ENCODE measurements at regions of chr19 and their contacts with region 1.

Region 1: GRCh38 chr19:45178262-45179071 is at the start of gene BLOC1S3:
- DNase-seq: peak; percentile 100
- H3K4me3 ChIP-seq: peak within 1 kb of the TSS; percentile 70 to 79 (median 74)
- H3K27ac ChIP-seq: peak within 1 kb of the TSS; percentile 90 to 93 (median 92)
- H3K4me1 ChIP-seq: peaks cover 27 to 47% (median 42%) of the 10 kb centered on the region in 4 donors
- H3K27me3 ChIP-seq: no peaks in the 10 kb centered on the region
- CTCF ChIP-seq: peak; percentile 24 to 33 (median 31)
- EP300 ChIP-seq: no peak
- POLR2A ChIP-seq: peak; percentile 90
- total RNA-seq, gene BLOC1S3: 5.4 to 21.9 (median 16.1) TPM

Region 2: GRCh38 chr19:45092747-45093678 is 85.5 kb before region 1 on chr19 and contains the start of gene PPP1R37:
- intact Hi-C with region 1: loop called (anchors 5 kb)
- DNase-seq: peak; percentile 98
- H3K4me3 ChIP-seq: peak within 1 kb of the TSS; percentile 90 to 98 (median 96)
- H3K27ac ChIP-seq: peak within 1 kb of the TSS; percentile 85 to 91 (median 88)
- H3K4me1 ChIP-seq: peaks cover 48 to 66% (median 65%) of the 10 kb centered on the region in 4 donors
- H3K27me3 ChIP-seq: no peaks in the 10 kb centered on the region
- CTCF ChIP-seq: peak in 2 of 3 experiments; percentile 10 to 52
- EP300 ChIP-seq: no peak
- POLR2A ChIP-seq: peak; percentile 9
- total RNA-seq, gene PPP1R37: 21.0 to 46.7 (median 28.3) TPM